PC-3 (cell line): ENCODE measurements at regions of chr11 and their contacts with region 1.

Region 1: DNA sequence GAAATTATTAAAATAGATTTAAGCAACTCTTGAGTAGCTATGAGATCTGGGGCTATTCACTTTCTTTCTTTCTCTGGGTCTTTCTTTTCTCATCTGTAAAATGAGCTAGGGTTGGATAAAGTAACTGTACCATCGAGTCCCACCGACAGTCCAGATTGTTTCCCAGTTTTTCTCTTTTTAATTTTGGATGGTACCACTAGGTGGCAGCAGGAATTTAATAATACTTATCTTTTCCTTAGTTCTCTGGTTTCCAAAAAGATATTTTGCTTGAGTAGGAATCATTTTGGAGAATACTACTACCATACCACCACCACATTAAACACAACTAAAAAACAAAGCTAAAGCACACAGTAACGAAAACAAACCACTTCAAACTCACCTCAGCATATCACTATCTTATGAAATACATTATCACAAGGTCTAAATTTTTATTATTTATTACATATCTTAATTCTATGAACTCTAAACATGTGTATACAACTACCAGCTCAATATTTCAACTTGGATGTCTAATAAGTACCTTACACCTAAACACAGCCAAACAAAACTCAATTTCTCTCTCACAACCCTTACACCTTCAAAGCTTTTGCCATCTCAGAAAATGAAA is 584.0 kb downstream of the KCNA4 start:
- DNase-seq: peak; percentile 63
- ATAC-seq: peak; percentile 45; the same call in 1 of the 2 replicates
- H3K4me3 ChIP-seq: no peak overlapping the region
- H3K27ac ChIP-seq: no peak overlapping the region
- H3K4me1 ChIP-seq: no peaks in the 10 kb centered on the region
- H3K27me3 ChIP-seq: no peaks in the 10 kb centered on the region
- CTCF ChIP-seq: peak; percentile 71

Region 2: DNA sequence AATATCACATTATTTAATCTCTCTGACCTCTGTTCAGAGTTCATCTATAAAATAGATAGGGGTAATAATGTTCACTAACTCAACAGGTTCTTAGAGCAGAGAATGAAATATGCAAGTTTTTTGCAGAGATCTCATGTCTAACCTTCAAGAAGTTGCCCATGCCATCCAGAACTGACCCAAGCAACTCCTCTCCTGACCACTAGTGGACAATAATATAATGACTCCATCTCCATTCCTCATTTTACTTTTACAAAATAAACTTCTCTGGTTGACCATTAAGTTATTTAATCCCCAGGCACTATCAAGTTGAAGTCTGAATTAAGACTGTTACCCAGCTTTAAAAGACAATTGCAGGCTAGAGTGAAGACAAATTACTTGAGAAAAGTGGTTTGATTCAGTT is 201.4 kb after region 1 on chr11:
- CTCF ChIA-PET with region 1: no interaction called
- POLR2A ChIA-PET with region 1: no interaction called
- intact Hi-C with region 1: loop called (anchors 5 kb)
- DNase-seq: peak; percentile 23
- ATAC-seq: peak; percentile 33; the same call in 1 of the 2 replicates
- H3K4me3 ChIP-seq: no peak overlapping the region
- H3K27ac ChIP-seq: no peak overlapping the region
- H3K4me1 ChIP-seq: no peaks in the 10 kb centered on the region
- H3K27me3 ChIP-seq: no peaks in the 10 kb centered on the region
- CTCF ChIP-seq: peak; percentile 51; the same call in 1 of the 2 replicates

Region 3: GRCh38 chr11:30143098-30143705 is 710.4 kb after region 1 on chr11:
- CTCF ChIA-PET with region 1: no interaction called
- POLR2A ChIA-PET with region 1: no interaction called
- intact Hi-C with region 1: loop called (anchors 1 kb)
- DNase-seq: peak; percentile 68
- ATAC-seq: no peak
- H3K4me3 ChIP-seq: no peak overlapping the region
- H3K27ac ChIP-seq: no peak overlapping the region
- H3K4me1 ChIP-seq: no peaks in the 10 kb centered on the region
- H3K27me3 ChIP-seq: no peaks in the 10 kb centered on the region
- CTCF ChIP-seq: peak; percentile 79

Region 4: DNA sequence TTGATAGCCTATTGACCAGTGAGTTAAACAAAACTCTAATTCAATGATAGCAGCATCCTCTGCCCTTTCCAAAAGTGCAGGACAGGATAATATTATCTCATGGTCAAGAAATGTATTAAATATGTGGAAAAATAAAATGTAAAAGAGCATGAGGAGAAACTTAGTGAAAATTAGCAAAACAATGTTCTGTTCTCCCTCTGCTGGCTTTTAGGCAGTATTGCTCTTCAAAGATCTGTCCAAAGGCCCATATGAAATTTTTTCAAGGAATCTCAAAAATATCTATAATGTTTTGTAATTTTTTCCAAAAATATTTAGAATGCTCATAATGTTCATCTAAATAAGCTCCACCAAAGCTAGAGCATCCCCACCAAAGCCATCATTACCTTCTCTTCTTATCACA is 881.8 kb after region 1 on chr11:
- CTCF ChIA-PET with region 1: no interaction called
- POLR2A ChIA-PET with region 1: no interaction called
- intact Hi-C with region 1: loop called (anchors 1 kb)
- DNase-seq: peak; percentile 7
- ATAC-seq: no peak
- H3K4me3 ChIP-seq: no peak overlapping the region
- H3K27ac ChIP-seq: no peak overlapping the region
- H3K4me1 ChIP-seq: no peaks in the 10 kb centered on the region
- H3K27me3 ChIP-seq: peaks cover 6% of the 10 kb centered on the region
- CTCF ChIP-seq: peak; percentile 55